ENCODE measurements at regions of chr7 and their contacts with region 1.

Region 1: DNA sequence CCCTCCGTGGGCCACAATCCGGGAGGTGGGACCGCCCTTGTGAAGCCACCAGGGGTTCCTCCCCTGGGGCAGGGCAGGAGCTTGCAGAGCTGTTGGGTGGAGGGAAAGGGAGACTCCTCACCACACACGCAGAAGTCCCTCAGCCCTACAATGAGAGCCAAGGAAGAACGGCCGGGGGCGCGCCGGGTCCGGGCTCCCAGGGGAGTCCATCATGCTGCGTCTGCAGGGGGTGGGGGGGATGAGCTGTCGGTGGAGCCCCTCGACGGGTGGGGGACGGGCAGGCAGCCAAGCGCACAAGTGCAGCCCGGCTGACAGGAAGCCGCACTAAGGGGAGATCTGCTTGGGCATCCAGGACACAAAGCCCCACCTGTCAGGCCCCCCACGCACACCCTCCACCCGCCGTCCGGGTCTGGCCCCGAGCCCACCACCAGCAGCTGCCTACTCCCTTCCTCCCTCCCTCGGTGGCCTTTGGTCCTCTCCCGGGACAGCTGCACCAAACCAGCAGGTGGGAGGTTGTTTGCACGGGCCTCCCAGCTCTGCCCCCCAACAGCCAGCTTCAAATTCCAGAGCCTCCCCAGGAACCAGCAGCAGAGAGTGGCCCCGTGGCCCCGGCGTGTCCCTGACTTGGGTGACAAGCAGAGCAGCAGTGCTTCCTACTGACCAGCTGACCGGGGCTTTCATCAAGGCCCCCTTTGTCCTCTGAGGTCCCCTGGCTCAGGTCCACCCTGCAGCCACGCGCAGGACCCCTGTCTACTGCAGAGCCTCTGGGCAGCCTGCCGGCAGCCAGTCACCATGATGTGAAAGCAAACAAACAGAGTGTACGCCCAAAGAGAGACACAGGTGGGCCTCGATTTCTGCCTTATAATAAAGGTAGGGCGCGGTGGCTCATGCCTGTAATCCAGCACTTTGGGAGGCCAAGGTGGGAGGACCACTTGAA is 50.3 kb downstream of the HIP1 start:
- DNase-seq: peak; percentile 40
- ATAC-seq: peak; percentile 70
- H3K4me3 Mint-ChIP-seq: peak overlapping the region; percentile 59
- H3K27ac Mint-ChIP-seq: peak overlapping the region; percentile 30
- H3K4me1 Mint-ChIP-seq: peaks cover 48% of the 10 kb centered on the region
- H3K27me3 Mint-ChIP-seq: peaks cover 5% of the 10 kb centered on the region
- CTCF ChIP-seq: no peak

Region 2: GRCh38 chr7:75662579-75663301 is 25.7 kb before region 1 on chr7:
- CTCF ChIA-PET with region 1: no interaction called
- POLR2A ChIA-PET with region 1: interaction called, 11 read pairs
- intact Hi-C with region 1: loop called (anchors 2 kb)
- DNase-seq: peak; percentile 44
- ATAC-seq: peak; percentile 88
- H3K4me3 Mint-ChIP-seq: peak overlapping the region; percentile 55
- H3K27ac Mint-ChIP-seq: peak overlapping the region; percentile 84
- H3K4me1 Mint-ChIP-seq: peaks cover 29% of the 10 kb centered on the region
- H3K27me3 Mint-ChIP-seq: no peaks in the 10 kb centered on the region
- CTCF ChIP-seq: no peak

Region 3: GRCh38 chr7:75729851-75730274 is 41.4 kb after region 1 on chr7:
- CTCF ChIA-PET with region 1: no interaction called
- POLR2A ChIA-PET with region 1: interaction called, 6 read pairs
- intact Hi-C with region 1: loop called (anchors 2 kb)
- DNase-seq: no peak
- ATAC-seq: no peak
- H3K4me3 Mint-ChIP-seq: no peak overlapping the region
- H3K27ac Mint-ChIP-seq: peak overlapping the region; percentile 60
- H3K4me1 Mint-ChIP-seq: peaks cover 43% of the 10 kb centered on the region
- H3K27me3 Mint-ChIP-seq: no peaks in the 10 kb centered on the region
- CTCF ChIP-seq: no peak

Region 4: DNA sequence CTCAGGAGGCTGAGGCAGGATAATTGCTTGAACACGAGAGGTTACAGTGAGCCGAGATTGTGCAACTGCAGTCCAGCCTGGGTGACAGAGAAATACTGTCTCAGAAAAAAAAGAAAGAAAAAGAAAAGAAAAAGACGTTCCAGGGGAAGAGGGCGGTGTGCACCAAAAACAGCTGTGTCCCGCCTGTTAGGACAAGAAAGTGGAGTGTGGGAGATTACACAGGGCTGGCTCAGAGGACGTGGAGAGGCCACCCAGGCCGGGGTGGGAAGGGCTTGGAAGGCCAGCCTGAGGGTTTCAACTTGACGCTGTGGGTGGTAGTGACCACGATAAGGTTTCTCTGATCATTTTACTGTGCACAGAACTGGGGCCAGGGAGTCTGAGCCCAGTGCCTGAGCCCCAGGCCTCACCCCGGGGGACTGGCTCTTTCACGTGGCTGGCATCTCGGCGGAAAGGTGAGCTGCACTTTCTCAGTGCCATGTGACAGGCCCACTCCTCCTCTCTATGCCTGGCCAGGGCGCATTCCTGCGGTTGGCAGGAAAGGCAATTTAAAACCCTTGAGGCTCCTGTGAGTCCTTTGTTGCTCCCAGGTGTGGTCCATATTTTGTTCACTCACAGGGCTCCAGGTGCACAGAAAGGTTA is 204.3 kb after region 1 on chr7:
- CTCF ChIA-PET with region 1: no interaction called
- POLR2A ChIA-PET with region 1: no interaction called
- intact Hi-C with region 1: no loop called
- DNase-seq: no peak
- ATAC-seq: no peak
- H3K4me3 Mint-ChIP-seq: no peak overlapping the region
- H3K27ac Mint-ChIP-seq: no peak overlapping the region
- H3K4me1 Mint-ChIP-seq: no peaks in the 10 kb centered on the region
- H3K27me3 Mint-ChIP-seq: no peaks in the 10 kb centered on the region
- CTCF ChIP-seq: no peak

Measured in activated B cell treated with CpG ODN at 0.5 μM for 24 hours (primary cell).